ENCODE measurements at regions of chr11 and their contacts with region 1.

Region 1: GRCh38 chr11:83827940-83828554 is 541.9 kb upstream of the CCDC90B start:
- DNase-seq: no peak
- H3K4me3 ChIP-seq: peak overlapping the region; percentile 32
- H3K27ac ChIP-seq: no peak overlapping the region
- H3K4me1 ChIP-seq: no peaks in the 10 kb centered on the region
- H3K27me3 ChIP-seq: no peaks in the 10 kb centered on the region
- CTCF ChIP-seq: peak; percentile 58

Region 2: DNA sequence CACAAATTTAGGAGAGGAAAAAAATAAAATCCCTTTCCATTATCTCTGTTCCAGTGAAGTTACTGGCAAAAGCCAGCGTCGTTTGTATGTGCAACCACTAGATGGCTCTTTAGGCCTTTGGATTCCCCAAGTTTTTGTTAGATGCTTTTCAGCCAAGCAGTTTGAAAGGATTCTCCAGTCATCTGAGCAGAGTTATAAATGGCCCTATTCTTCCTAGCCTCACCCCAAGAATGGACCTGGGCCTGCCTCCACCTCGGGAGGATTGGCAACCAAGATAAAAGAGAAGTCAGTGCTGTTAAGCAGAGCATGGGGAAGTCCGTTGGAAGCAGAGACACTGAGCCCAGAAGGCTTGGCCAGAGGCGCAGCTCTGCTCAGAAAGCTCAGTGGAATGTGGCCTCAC is 1109.7 kb before region 1 on chr11:
- intact Hi-C with region 1: loop called (anchors 10 kb)
- DNase-seq: no peak
- H3K4me3 ChIP-seq: no peak overlapping the region
- H3K27ac ChIP-seq: no peak overlapping the region
- H3K4me1 ChIP-seq: peaks cover 10% of the 10 kb centered on the region
- H3K27me3 ChIP-seq: peaks cover 39% of the 10 kb centered on the region
- CTCF ChIP-seq: peak; percentile 82

Region 3: GRCh38 chr11:83865636-83866461 is 37.8 kb after region 1 on chr11:
- intact Hi-C with region 1: no loop called
- DNase-seq: no peak
- H3K4me3 ChIP-seq: no peak overlapping the region
- H3K27ac ChIP-seq: no peak overlapping the region
- H3K4me1 ChIP-seq: no peaks in the 10 kb centered on the region
- H3K27me3 ChIP-seq: no peaks in the 10 kb centered on the region
- CTCF ChIP-seq: no peak